Naive thymus-derived CD4-positive, alpha-beta T cell (primary cell): ENCODE measurements at regions of chr2 and their contacts with region 1.

Region 1: DNA sequence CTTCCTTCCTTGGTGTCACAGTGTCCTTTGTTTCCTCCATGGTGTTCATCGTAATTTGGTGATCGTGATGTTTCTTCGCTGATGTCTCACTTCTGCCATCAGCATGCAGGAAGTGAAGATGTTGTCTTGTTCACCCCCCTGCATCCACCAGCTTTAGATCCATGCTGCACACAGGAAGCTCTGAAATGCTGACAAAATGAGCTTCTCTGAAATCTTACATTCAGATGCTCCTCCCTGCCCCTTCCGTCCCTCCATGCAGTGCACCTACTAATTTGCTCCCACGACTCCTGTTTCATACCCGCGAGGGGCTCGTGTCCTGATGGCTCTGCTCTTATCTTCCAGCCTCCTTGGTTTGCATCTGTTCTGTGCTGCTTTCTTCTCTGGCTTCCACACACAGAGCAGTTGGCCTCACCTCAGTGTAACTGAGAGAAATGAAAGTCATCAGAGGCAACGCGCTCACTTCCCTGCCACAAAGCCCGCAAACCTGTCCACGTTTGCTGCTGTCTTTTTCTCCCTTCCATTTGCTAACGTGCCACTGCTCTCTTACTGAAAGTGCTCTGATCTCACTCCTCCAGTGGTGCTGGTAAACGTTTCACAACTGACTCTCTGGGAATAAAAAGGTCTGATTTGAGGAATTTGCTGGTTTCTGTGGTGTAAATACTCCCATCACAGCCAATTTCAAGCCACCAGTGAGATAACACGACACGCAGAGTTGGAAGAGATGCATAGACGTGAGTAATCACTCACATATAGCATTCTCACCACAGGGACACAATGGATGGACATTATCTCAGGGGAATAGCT is 41.0 kb upstream of the MGAT4A start:
- DNase-seq: peak; percentile 38 to 93 (median 89)
- ATAC-seq: peak; percentile 83
- H3K4me3 ChIP-seq: peak overlapping the region; percentile 43
- H3K4me3 Mint-ChIP-seq: peak overlapping the region; percentile 82 to 99 (median 91)
- H3K27ac ChIP-seq: peak overlapping the region; percentile 84
- H3K27ac Mint-ChIP-seq: peak overlapping the region; percentile 95 to 99 (median 98)
- H3K4me1 ChIP-seq: peaks cover 59 to 67% of the 10 kb centered on the region in 2 donors
- H3K4me1 Mint-ChIP-seq: peaks cover 56 to 95% (median 86%) of the 10 kb centered on the region in 7 donors
- H3K27me3 ChIP-seq: no peaks in the 10 kb centered on the region
- H3K27me3 Mint-ChIP-seq: no peaks in the 10 kb centered on the region

Region 2: GRCh38 chr2:98444436-98445176 is 327.3 kb before region 1 on chr2 and contains the start of gene INPP4A:
- CTCF ChIA-PET with region 1: no interaction called
- POLR2A ChIA-PET with region 1: no interaction called
- intact Hi-C with region 1: loop called (anchors 1 to 5 kb)
- DNase-seq: peak; percentile 67 to 86 (median 78)
- ATAC-seq: peak; percentile 82
- H3K4me3 ChIP-seq: peak within 1 kb of the TSS; percentile 93
- H3K4me3 Mint-ChIP-seq: peak within 1 kb of the TSS; percentile 91 to 99 (median 97)
- H3K27ac ChIP-seq: peak within 1 kb of the TSS; percentile 83
- H3K27ac Mint-ChIP-seq: peak within 1 kb of the TSS; percentile 91 to 99 (median 97)
- H3K4me1 ChIP-seq: peaks cover 21 to 37% of the 10 kb centered on the region in 2 donors
- H3K4me1 Mint-ChIP-seq: peaks cover 19 to 54% (median 39%) of the 10 kb centered on the region in 7 donors
- H3K27me3 ChIP-seq: no peaks in the 10 kb centered on the region
- H3K27me3 Mint-ChIP-seq: no peaks in the 10 kb centered on the region
- total RNA-seq, gene INPP4A: 126 to 165 (median 157) TPM

Region 3: DNA sequence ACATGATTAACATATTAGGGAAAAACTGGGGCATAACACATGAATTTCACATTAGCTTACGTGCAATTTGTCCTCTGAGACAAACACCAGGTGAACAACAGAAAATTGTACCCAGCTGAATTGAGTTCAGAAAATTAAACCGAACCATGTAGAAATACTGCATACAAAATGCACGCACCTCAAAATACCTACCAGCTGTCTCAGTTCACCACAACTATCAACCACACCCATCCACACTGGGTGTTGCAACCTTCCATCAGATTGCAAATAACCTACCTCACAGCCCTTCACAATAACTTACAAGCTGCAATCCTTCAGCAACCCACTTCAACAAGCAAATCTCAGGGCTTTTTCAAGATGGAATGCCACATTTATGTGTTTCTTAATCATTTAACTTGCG is 107.6 kb before region 1 on chr2:
- CTCF ChIA-PET with region 1: interaction called, 5 read pairs
- POLR2A ChIA-PET with region 1: interaction called, 140 read pairs
- intact Hi-C with region 1: loop called (anchors 1 to 2 kb)
- DNase-seq: peak in 8 of 9 donors; percentile 39 to 88 (median 80)
- ATAC-seq: peak; percentile 83
- H3K4me3 ChIP-seq: peak overlapping the region; percentile 14
- H3K4me3 Mint-ChIP-seq: peak overlapping the region; percentile 56 to 94 (median 80)
- H3K27ac ChIP-seq: peak overlapping the region; percentile 79
- H3K27ac Mint-ChIP-seq: peak overlapping the region; percentile 91 to 99 (median 97)
- H3K4me1 ChIP-seq: peaks cover 51 to 70% of the 10 kb centered on the region in 2 donors
- H3K4me1 Mint-ChIP-seq: peaks cover 35 to 93% (median 75%) of the 10 kb centered on the region in 7 donors
- H3K27me3 ChIP-seq: no peaks in the 10 kb centered on the region
- H3K27me3 Mint-ChIP-seq: no peaks in the 10 kb centered on the region

Region 4: DNA sequence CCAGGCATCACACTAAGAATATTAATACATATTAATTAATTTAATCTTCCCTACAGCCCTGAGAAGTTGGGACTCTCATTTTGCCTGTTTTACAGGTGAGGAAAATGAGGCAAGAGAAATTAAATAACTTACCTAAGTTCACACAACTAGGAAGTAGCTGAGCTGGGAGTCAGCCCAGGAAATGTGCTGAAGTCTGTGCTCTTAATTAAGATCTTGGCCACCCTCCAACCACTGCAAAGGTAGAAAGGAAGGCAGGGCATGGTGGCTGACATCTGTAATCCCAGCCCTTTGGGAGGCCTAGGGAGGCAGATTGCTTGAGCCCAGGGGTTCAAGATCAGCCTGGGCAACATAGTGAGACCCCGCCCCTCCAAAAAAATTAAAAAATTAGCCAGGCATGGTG is 28.1 kb before region 1 on chr2:
- CTCF ChIA-PET with region 1: interaction called, 3 read pairs
- POLR2A ChIA-PET with region 1: interaction called, 604 read pairs
- intact Hi-C with region 1: no loop called
- DNase-seq: no peak
- ATAC-seq: no peak
- H3K4me3 ChIP-seq: no peak overlapping the region
- H3K4me3 Mint-ChIP-seq: peak overlapping the region in 7 of 10 donors; percentile 17 to 63 (median 44)
- H3K27ac ChIP-seq: no peak overlapping the region
- H3K27ac Mint-ChIP-seq: peak overlapping the region in 6 of 9 donors; percentile 34 to 74 (median 56)
- H3K4me1 ChIP-seq: peaks cover 13 to 45% of the 10 kb centered on the region in 2 donors
- H3K4me1 Mint-ChIP-seq: peaks cover 34 to 83% (median 74%) of the 10 kb centered on the region in 7 donors
- H3K27me3 ChIP-seq: no peaks in the 10 kb centered on the region
- H3K27me3 Mint-ChIP-seq: no peaks in the 10 kb centered on the region

Region 5: GRCh38 chr2:98805412-98806171 is 33.7 kb after region 1 on chr2:
- CTCF ChIA-PET with region 1: no interaction called
- POLR2A ChIA-PET with region 1: interaction called, 5 read pairs
- intact Hi-C with region 1: loop called in 1 of 2 experiments (anchors 5 kb)
- DNase-seq: no peak
- ATAC-seq: peak; percentile 74
- H3K4me3 ChIP-seq: no peak overlapping the region
- H3K4me3 Mint-ChIP-seq: no peak overlapping the region
- H3K27ac ChIP-seq: no peak overlapping the region
- H3K27ac Mint-ChIP-seq: peak overlapping the region in 2 of 9 donors; percentile 14 to 47
- H3K4me1 ChIP-seq: peaks cover 0 to 13% of the 10 kb centered on the region in 2 donors
- H3K4me1 Mint-ChIP-seq: peaks cover 8 to 20% (median 15%) of the 10 kb centered on the region in 7 donors
- H3K27me3 ChIP-seq: no peaks in the 10 kb centered on the region
- H3K27me3 Mint-ChIP-seq: peaks cover 0 to 10% (median 0%) of the 10 kb centered on the region in 5 donors

Region 6: GRCh38 chr2:98835831-98836385 is 64.0 kb after region 1 on chr2:
- CTCF ChIA-PET with region 1: interaction called, 3 read pairs
- POLR2A ChIA-PET with region 1: interaction called, 17 read pairs
- intact Hi-C with region 1: loop called in 1 of 2 experiments (anchors 1 kb)
- DNase-seq: peak in 7 of 9 donors; percentile 55 to 78 (median 72)
- ATAC-seq: peak; percentile 87
- H3K4me3 ChIP-seq: peak overlapping the region; percentile 1
- H3K4me3 Mint-ChIP-seq: peak overlapping the region; percentile 32 to 79 (median 52)
- H3K27ac ChIP-seq: peak overlapping the region; percentile 66
- H3K27ac Mint-ChIP-seq: peak overlapping the region; percentile 78 to 98 (median 88)
- H3K4me1 ChIP-seq: peaks cover 16 to 43% of the 10 kb centered on the region in 2 donors
- H3K4me1 Mint-ChIP-seq: peaks cover 24 to 51% (median 28%) of the 10 kb centered on the region in 7 donors
- H3K27me3 ChIP-seq: no peaks in the 10 kb centered on the region
- H3K27me3 Mint-ChIP-seq: peaks cover 0 to 17% (median 0%) of the 10 kb centered on the region in 5 donors

Region 7: DNA sequence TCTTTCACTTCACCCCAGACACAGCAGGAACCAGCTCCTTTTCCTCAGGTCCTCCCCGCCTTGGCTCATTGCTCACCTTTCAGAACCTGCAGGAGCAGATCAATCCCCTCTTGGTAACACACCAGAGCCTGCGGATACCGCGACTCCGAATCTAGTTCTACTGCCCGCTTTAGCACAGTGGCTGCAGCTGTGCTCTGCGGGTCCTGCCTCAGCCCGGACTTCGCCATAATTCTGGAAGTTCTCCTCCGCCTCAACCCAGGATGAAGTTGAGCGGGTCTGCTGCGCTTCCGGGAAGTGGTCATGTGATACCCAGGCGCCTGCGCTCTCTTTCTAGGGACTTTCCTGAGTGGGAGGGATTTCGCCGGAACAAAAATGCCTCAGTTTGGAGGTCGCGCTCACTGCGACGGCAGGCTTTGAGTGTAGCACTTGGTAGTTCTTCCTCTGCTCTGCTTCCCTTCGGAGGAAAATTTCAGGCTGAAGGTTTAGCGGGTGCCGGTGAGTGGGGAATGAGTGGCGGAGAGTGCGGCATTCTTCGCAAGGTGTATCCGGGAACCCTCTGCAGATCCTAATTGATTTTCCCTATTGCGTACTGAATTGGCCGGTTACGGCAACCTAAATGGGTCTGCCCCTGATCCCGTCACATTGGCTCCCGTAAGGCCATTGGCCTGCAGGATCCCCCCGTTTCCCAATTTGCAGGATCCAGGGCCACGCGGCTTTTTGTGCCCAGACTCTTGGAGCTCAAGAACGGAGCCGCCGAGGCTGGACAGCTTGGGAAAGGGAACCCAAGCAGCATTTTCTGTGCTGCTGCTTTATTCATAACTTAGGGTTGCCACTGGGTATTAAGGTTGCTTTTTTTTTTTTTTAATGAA is 409.1 kb after region 1 on chr2 and contains the starts of genes MITD1 and MRPL30:
- CTCF ChIA-PET with region 1: no interaction called
- POLR2A ChIA-PET with region 1: no interaction called
- intact Hi-C with region 1: loop called (anchors 1 to 2 kb)
- DNase-seq: peak; percentile 72 to 94 (median 90)
- ATAC-seq: peak; percentile 97
- H3K4me3 ChIP-seq: peak within 1 kb of the TSS; percentile 97
- H3K4me3 Mint-ChIP-seq: peak within 1 kb of the TSS; percentile 94 to 100 (median 99)
- H3K27ac ChIP-seq: peak within 1 kb of the TSS; percentile 89
- H3K27ac Mint-ChIP-seq: peak within 1 kb of the TSS; percentile 93 to 99 (median 99)
- H3K4me1 ChIP-seq: peaks cover 30 to 32% of the 10 kb centered on the region in 2 donors
- H3K4me1 Mint-ChIP-seq: peaks cover 41 to 85% (median 74%) of the 10 kb centered on the region in 7 donors
- H3K27me3 ChIP-seq: no peaks in the 10 kb centered on the region
- H3K27me3 Mint-ChIP-seq: no peaks in the 10 kb centered on the region
- total RNA-seq, gene MITD1: 26.8 to 80.5 (median 73.8) TPM
- total RNA-seq, gene MRPL30: 16.1 to 26.0 (median 21.9) TPM

Region 8: DNA sequence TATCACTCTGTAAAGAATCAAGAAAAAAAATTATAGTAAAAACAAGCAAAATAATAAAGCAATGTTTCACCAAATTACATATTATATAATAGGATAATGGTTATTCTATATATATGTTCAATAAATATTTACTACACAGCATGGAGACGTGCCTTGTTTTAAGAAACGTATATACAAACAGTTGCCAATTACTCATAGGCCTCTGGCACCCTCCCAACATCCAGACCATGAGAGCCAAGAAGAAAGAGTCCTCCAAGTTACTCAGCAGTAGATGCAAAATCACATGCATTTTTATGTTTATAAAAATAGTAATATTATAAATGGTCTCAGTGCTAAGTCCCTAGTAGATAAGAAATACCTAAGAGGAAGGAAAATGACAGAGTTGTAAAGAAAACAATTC is 653.1 kb after region 1 on chr2:
- CTCF ChIA-PET with region 1: no interaction called
- POLR2A ChIA-PET with region 1: no interaction called
- intact Hi-C with region 1: no loop called
- DNase-seq: no peak
- ATAC-seq: no peak
- H3K4me3 ChIP-seq: no peak overlapping the region
- H3K4me3 Mint-ChIP-seq: no peak overlapping the region
- H3K27ac ChIP-seq: no peak overlapping the region
- H3K27ac Mint-ChIP-seq: no peak overlapping the region
- H3K4me1 ChIP-seq: no peaks in the 10 kb centered on the region
- H3K4me1 Mint-ChIP-seq: no peaks in the 10 kb centered on the region
- H3K27me3 ChIP-seq: no peaks in the 10 kb centered on the region
- H3K27me3 Mint-ChIP-seq: no peaks in the 10 kb centered on the region